CD4-positive, alpha-beta memory T cell (primary cell): ENCODE measurements at regions of chr12 and their contacts with region 1.

Region 1: GRCh38 chr12:121351820-121352681 is at the start of gene ANAPC5:
- DNase-seq: peak; percentile 90 to 95 (median 92)
- H3K4me3 ChIP-seq: peak within 1 kb of the TSS; percentile 94 to 98
- H3K4me3 Mint-ChIP-seq: peak within 1 kb of the TSS; percentile 91 to 100 (median 98)
- H3K27ac ChIP-seq: peak within 1 kb of the TSS; percentile 65
- H3K27ac Mint-ChIP-seq: peak within 1 kb of the TSS; percentile 87 to 99 (median 98)
- H3K4me1 ChIP-seq: peaks cover 20% of the 10 kb centered on the region
- H3K4me1 Mint-ChIP-seq: peaks cover 11 to 51% (median 22%) of the 10 kb centered on the region in 4 donors
- H3K27me3 ChIP-seq: no peaks in the 10 kb centered on the region
- H3K27me3 Mint-ChIP-seq: peaks cover 0 to 2% of the 10 kb centered on the region in 2 donors
- total RNA-seq, gene ANAPC5: 143 to 144 TPM

Region 2: DNA sequence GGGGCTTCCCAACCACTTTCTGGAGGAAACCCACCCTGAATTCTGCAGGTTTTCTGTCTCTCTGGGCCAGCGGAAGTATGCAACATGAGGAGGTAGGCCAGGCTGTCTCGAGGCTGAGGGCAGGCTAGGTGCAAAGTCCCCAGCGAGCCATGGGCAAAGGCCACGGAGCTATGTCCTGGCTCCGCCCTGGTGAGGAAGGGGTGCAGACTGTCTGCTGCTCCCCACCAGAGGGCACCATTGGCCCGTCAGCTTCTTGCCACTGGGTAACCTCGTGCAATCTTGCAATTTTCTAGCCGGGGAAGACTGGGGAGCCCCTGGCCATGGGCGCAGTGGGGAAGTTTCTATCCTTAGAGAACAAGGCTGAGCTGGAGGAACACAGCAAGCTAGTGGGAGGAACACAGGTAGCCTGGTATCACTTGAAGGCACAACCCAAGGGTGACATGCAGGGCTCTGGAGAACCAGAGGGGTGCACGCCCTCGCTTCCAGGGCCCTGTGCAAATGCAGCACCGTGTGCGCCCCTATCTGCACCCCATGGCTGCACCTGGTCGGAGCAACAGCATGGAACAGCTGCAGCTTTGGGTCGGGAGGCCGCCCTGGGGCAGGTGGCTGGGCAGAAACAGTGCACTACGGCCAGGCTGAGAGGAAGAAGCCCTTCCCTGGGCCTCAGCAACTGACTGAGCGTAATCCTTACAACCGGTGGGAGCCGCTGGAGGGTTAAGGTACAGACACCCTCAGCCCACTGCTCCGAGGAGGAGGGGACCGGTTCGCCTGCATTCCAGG is 1123.6 kb before region 1 on chr12:
- CTCF ChIA-PET with region 1: no interaction called
- POLR2A ChIA-PET with region 1: no interaction called
- intact Hi-C with region 1: no loop called
- DNase-seq: peak; percentile 84 to 87 (median 86)
- H3K4me3 ChIP-seq: peak overlapping the region in 1 of 2 donors; percentile 3
- H3K4me3 Mint-ChIP-seq: peak overlapping the region; percentile 65 to 84 (median 70)
- H3K27ac ChIP-seq: peak overlapping the region; percentile 43
- H3K27ac Mint-ChIP-seq: peak overlapping the region; percentile 29 to 94 (median 86)
- H3K4me1 ChIP-seq: peaks cover 85% of the 10 kb centered on the region
- H3K4me1 Mint-ChIP-seq: peaks cover 59 to 86% (median 75%) of the 10 kb centered on the region in 4 donors
- H3K27me3 ChIP-seq: no peaks in the 10 kb centered on the region
- H3K27me3 Mint-ChIP-seq: no peaks in the 10 kb centered on the region

Region 3: GRCh38 chr12:121334513-121335343 is 17.3 kb before region 1 on chr12:
- CTCF ChIA-PET with region 1: interaction called, 24 read pairs
- POLR2A ChIA-PET with region 1: interaction called, 8 read pairs
- intact Hi-C with region 1: no loop called
- DNase-seq: peak in 4 of 5 donors; percentile 52 to 58 (median 56)
- H3K4me3 ChIP-seq: no peak overlapping the region
- H3K4me3 Mint-ChIP-seq: no peak overlapping the region
- H3K27ac ChIP-seq: peak overlapping the region; percentile 17
- H3K27ac Mint-ChIP-seq: peak overlapping the region in 6 of 7 donors; percentile 36 to 89 (median 60)
- H3K4me1 ChIP-seq: peaks cover 4% of the 10 kb centered on the region
- H3K4me1 Mint-ChIP-seq: peaks cover 2 to 6% (median 4%) of the 10 kb centered on the region in 4 donors
- H3K27me3 ChIP-seq: no peaks in the 10 kb centered on the region
- H3K27me3 Mint-ChIP-seq: no peaks in the 10 kb centered on the region

Region 4: GRCh38 chr12:121391619-121392324 is 39.7 kb after region 1 on chr12:
- CTCF ChIA-PET with region 1: no interaction called
- POLR2A ChIA-PET with region 1: interaction called, 12 read pairs
- intact Hi-C with region 1: no loop called
- DNase-seq: peak in 4 of 5 donors; percentile 24 to 35 (median 29)
- H3K4me3 ChIP-seq: peak overlapping the region in 1 of 2 donors; percentile 20
- H3K4me3 Mint-ChIP-seq: peak overlapping the region; percentile 23 to 82 (median 73)
- H3K27ac ChIP-seq: peak overlapping the region; percentile 15
- H3K27ac Mint-ChIP-seq: peak overlapping the region; percentile 32 to 88 (median 49)
- H3K4me1 ChIP-seq: peaks cover 12% of the 10 kb centered on the region
- H3K4me1 Mint-ChIP-seq: peaks cover 7 to 11% (median 10%) of the 10 kb centered on the region in 4 donors
- H3K27me3 ChIP-seq: no peaks in the 10 kb centered on the region
- H3K27me3 Mint-ChIP-seq: no peaks in the 10 kb centered on the region

Region 5: DNA sequence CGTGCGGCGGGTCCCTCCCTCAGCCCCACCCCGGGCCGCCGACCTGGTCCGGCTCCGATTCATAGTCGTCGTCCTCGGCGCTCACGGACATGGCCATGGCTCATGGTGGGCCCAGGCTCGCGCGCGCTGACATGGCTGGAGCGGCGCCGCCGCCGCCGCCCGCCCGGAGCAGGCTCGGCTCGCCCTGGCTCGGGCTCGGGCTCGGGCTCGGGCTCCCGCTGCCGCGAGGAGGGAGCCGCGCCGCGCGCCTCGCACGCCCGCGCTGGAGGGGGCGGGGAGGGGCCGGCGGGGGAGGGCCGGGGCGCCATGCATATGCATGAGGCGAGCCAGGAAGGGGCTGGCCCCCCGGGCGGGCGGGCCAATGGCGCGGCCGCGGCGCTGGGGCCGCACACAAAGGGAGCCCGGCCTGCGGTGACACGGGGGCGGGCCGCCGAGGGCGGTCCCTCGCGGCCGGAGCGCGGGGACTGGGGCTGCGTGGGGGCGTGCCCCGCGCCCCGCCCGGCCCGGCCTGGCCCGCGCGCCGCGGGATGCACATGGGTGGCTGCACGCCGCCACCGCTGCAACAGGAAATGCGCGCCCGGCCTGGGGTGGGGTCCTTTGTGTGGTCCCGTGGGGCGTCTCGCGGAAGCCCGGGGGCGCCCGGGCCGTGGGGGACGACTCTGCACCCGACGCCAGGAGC is 115.2 kb after region 1 on chr12:
- CTCF ChIA-PET with region 1: interaction called, 3 read pairs
- POLR2A ChIA-PET with region 1: no interaction called
- intact Hi-C with region 1: loop called (anchors 1 kb)
- DNase-seq: peak; percentile 85 to 91 (median 87)
- H3K4me3 ChIP-seq: peak overlapping the region in 1 of 2 donors; percentile 35
- H3K4me3 Mint-ChIP-seq: peak overlapping the region in 5 of 8 donors; percentile 21 to 74 (median 47)
- H3K27ac ChIP-seq: peak overlapping the region; percentile 42
- H3K27ac Mint-ChIP-seq: no peak overlapping the region
- H3K4me1 ChIP-seq: peaks cover 25% of the 10 kb centered on the region
- H3K4me1 Mint-ChIP-seq: peaks cover 17 to 30% (median 22%) of the 10 kb centered on the region in 4 donors
- H3K27me3 ChIP-seq: no peaks in the 10 kb centered on the region
- H3K27me3 Mint-ChIP-seq: no peaks in the 10 kb centered on the region

Region 6: GRCh38 chr12:121724930-121725329 is 372.9 kb after region 1 on chr12:
- CTCF ChIA-PET with region 1: no interaction called
- POLR2A ChIA-PET with region 1: no interaction called
- intact Hi-C with region 1: no loop called
- DNase-seq: no peak
- H3K4me3 ChIP-seq: no peak overlapping the region
- H3K4me3 Mint-ChIP-seq: no peak overlapping the region
- H3K27ac ChIP-seq: no peak overlapping the region
- H3K27ac Mint-ChIP-seq: no peak overlapping the region
- H3K4me1 ChIP-seq: no peaks in the 10 kb centered on the region
- H3K4me1 Mint-ChIP-seq: no peaks in the 10 kb centered on the region
- H3K27me3 ChIP-seq: no peaks in the 10 kb centered on the region
- H3K27me3 Mint-ChIP-seq: no peaks in the 10 kb centered on the region